CD4-positive, alpha-beta memory T cell (primary cell): ENCODE measurements at regions of chr19 and their contacts with region 1.

Region 1: DNA sequence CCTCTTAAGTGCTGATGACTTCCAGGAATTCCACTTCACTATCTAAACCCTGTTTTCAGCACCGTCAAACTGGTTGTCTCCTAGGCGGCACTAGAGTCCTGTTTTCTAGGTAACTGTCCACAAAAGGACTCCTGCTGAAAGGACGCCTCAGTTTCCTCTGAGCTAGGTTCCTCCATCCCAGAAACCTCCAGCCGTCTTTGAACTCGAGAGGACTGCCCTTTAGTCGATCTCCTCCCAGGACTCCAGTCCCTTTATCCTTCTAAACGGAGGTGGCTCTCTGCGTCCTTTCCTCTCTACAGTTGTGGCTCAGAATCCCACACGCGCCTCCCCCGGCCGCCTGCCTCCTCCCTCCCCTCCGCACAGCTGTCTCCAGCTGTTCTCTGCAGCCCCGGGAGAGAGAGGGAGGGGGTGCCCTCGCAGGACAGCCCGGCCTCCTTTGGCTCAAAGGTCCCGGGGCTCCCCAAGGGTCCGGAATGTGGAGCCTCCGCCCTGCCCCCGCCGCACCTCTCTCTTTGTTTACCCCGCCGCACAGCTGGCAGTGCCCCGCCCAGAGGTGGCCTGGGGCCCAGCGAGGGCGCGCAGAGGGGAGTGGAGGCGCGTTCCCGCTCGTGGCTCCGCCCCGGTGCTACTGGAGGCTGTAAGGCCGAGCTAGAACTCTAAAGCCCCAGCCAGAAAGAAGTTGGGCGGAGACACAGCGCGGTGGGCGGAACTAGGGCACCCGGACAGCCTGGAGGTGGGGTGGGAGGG is 2.4 kb downstream of the LTBP4 start:
- DNase-seq: peak; percentile 94 to 99 (median 98)
- H3K4me3 ChIP-seq: peak overlapping the region in 1 of 2 donors; percentile 59
- H3K4me3 Mint-ChIP-seq: peak overlapping the region; percentile 80 to 97 (median 90)
- H3K27ac ChIP-seq: peak overlapping the region; percentile 61
- H3K27ac Mint-ChIP-seq: peak overlapping the region; percentile 96 to 99 (median 97)
- H3K4me1 ChIP-seq: peaks cover 84% of the 10 kb centered on the region
- H3K4me1 Mint-ChIP-seq: peaks cover 39 to 91% (median 64%) of the 10 kb centered on the region in 4 donors
- H3K27me3 ChIP-seq: peaks cover 14% of the 10 kb centered on the region
- H3K27me3 Mint-ChIP-seq: peaks cover 9 to 20% of the 10 kb centered on the region in 2 donors

Region 2: DNA sequence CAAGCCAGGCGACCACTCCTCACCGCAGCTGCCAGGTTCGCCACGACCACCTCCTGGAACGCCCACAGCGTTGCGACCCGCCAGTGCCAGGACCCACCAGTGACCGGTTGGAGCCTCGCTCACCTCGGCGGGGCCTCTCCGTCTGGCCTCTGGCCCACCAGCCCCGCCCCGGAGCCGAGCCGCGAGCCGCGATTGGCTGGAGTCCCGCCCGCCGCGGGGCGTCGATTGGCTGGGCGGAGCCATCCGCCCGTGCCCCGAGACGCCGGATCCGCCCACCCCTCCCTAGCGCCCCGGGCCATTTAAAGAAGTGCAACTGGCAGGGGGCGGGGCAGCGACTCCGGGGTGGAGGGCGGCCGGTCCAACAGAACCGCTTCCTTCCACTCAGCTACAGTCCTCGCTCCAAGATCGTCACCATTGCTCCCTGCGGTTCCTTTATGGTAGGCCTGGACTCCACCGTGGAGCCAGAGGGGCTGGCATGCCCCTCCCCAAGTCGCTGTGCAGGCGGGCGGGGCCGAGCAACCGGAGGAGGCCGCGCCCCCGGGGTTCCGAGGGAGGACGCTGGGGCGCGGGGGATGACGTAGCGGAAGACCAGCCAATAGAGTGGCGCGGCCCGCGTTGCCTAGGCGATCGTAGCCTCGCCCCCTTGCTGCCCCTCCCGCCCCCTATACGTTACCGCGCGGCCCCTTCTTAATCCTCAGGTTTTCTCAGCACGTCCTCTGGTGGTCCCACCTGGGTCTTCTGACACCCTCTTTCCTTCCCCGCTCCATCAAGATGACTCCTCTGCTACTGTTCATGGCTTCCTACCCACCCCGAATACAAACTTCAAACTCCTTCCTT is 159.2 kb before region 1 on chr19 and contains the start of gene SERTAD3:
- CTCF ChIA-PET with region 1: no interaction called
- POLR2A ChIA-PET with region 1: interaction called, 16 read pairs
- intact Hi-C with region 1: loop called (anchors 2 kb)
- DNase-seq: peak; percentile 96 to 99 (median 97)
- H3K4me3 ChIP-seq: peak within 1 kb of the TSS; percentile 96 to 100
- H3K4me3 Mint-ChIP-seq: peak within 1 kb of the TSS; percentile 96 to 100 (median 100)
- H3K27ac ChIP-seq: peak within 1 kb of the TSS; percentile 75
- H3K27ac Mint-ChIP-seq: peak within 1 kb of the TSS; percentile 85 to 100 (median 99)
- H3K4me1 ChIP-seq: peaks cover 11% of the 10 kb centered on the region
- H3K4me1 Mint-ChIP-seq: peaks cover 11 to 22% (median 18%) of the 10 kb centered on the region in 4 donors
- H3K27me3 ChIP-seq: no peaks in the 10 kb centered on the region
- H3K27me3 Mint-ChIP-seq: no peaks in the 10 kb centered on the region
- total RNA-seq, gene SERTAD3: 17.8 to 19.4 TPM

Region 3: GRCh38 chr19:40519352-40520322 is 83.9 kb before region 1 on chr19:
- CTCF ChIA-PET with region 1: no interaction called
- POLR2A ChIA-PET with region 1: no interaction called
- intact Hi-C with region 1: no loop called
- DNase-seq: no peak
- H3K4me3 ChIP-seq: no peak overlapping the region
- H3K4me3 Mint-ChIP-seq: no peak overlapping the region
- H3K27ac ChIP-seq: no peak overlapping the region
- H3K27ac Mint-ChIP-seq: no peak overlapping the region
- H3K4me1 ChIP-seq: no peaks in the 10 kb centered on the region
- H3K4me1 Mint-ChIP-seq: peaks cover under 1 to 6% (median 4%) of the 10 kb centered on the region in 4 donors
- H3K27me3 ChIP-seq: no peaks in the 10 kb centered on the region
- H3K27me3 Mint-ChIP-seq: peaks cover 14 to 30% of the 10 kb centered on the region in 2 donors

Region 4: DNA sequence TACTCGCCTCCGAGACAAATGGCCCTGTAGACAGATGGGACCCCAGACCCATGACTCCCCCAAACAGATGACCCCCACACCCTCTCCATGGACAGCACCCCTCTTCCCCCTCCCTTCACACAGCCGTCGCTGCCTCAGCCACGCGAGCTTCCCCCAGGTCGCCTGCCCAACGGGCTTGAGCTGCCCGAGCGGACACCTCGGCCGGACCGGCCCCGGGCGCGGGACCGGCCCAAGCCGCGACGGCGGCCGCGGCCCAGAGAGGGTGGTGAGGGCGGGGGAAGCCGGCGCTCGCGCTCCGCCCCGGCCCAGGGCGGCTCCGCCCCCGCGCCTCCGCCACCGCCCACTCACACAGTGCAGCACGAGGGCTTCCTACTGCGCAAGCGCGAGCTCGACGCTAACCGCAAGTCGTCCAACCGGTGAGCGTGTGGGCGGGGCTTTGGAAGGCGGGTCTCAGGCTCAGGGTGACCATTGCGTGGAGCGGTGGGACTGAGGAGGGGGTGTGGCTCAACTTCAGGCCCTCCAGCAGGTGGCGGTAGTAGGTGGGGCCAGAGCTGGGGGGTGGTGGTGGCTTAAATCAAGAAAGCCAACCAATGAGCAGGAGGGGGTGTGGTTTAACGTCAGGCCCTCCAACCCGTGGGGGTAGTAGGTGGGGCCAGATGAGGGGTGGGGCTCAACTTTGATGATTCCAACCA is 33.1 kb before region 1 on chr19:
- CTCF ChIA-PET with region 1: interaction called, 17 read pairs
- POLR2A ChIA-PET with region 1: interaction called, 71 read pairs
- intact Hi-C with region 1: no loop called
- DNase-seq: peak; percentile 95 to 98 (median 98)
- H3K4me3 ChIP-seq: peak overlapping the region; percentile 17 to 61
- H3K4me3 Mint-ChIP-seq: peak overlapping the region; percentile 65 to 88 (median 82)
- H3K27ac ChIP-seq: no peak overlapping the region
- H3K27ac Mint-ChIP-seq: peak overlapping the region; percentile 30 to 94 (median 91)
- H3K4me1 ChIP-seq: peaks cover 14% of the 10 kb centered on the region
- H3K4me1 Mint-ChIP-seq: peaks cover 8 to 26% (median 16%) of the 10 kb centered on the region in 4 donors
- H3K27me3 ChIP-seq: no peaks in the 10 kb centered on the region
- H3K27me3 Mint-ChIP-seq: peaks cover 5 to 7% of the 10 kb centered on the region in 2 donors

Region 5: GRCh38 chr19:40633207-40633606 is 29.6 kb after region 1 on chr19:
- CTCF ChIA-PET with region 1: interaction called, 106 read pairs
- POLR2A ChIA-PET with region 1: interaction called, 13 read pairs
- intact Hi-C with region 1: loop called (anchors 1 kb)
- DNase-seq: no peak
- H3K4me3 ChIP-seq: no peak overlapping the region
- H3K4me3 Mint-ChIP-seq: no peak overlapping the region
- H3K27ac ChIP-seq: no peak overlapping the region
- H3K27ac Mint-ChIP-seq: no peak overlapping the region
- H3K4me1 ChIP-seq: peaks cover 6% of the 10 kb centered on the region
- H3K4me1 Mint-ChIP-seq: peaks cover 4 to 14% (median 7%) of the 10 kb centered on the region in 4 donors
- H3K27me3 ChIP-seq: no peaks in the 10 kb centered on the region
- H3K27me3 Mint-ChIP-seq: peaks cover 0 to 2% of the 10 kb centered on the region in 2 donors

Region 6: DNA sequence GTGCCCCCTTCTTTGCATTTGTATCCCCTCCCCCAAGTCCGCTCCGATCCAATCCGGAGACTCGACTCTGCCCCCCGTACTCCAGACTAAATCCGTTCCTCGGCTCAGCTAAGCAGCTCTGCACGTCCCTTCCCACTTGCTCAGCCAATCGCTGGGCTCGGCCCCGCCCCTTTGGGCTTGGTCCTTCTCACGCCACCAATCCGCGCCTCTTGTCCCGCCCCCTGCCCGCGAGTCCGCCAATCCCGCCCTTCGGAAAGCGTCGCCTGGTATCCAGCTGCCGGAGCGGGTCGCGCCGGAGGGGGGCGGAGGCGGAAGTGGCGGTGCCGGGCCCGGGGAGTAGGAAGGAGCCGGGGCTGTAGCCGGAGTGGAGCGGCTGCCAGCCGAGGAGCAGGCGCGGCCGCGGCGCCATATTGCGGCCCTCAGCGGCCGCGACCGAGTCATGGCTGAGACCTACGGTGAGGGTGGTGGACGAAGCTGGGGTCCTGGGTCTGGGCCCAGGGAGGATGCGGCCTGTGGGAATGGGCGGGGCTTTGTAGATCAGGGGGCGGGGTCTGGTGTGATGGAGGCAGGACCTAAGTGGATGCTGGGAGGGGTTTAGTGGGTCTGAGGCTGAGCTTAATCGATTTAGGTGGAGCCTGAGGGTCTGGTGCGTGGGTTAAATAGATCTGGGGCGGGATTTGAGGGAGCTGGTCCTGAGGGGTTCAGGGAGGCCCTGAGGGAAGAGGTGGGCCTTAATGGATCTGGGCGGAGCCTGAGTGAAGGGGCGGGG is 174.6 kb after region 1 on chr19 and contains the start of gene RAB4B:
- CTCF ChIA-PET with region 1: no interaction called
- POLR2A ChIA-PET with region 1: interaction called, 11 read pairs
- intact Hi-C with region 1: no loop called
- DNase-seq: peak; percentile 100
- H3K4me3 ChIP-seq: peak within 1 kb of the TSS; percentile 67 to 98
- H3K4me3 Mint-ChIP-seq: peak within 1 kb of the TSS; percentile 92 to 98 (median 95)
- H3K27ac ChIP-seq: peak within 1 kb of the TSS; percentile 89
- H3K27ac Mint-ChIP-seq: peak within 1 kb of the TSS; percentile 95 to 99 (median 99)
- H3K4me1 ChIP-seq: peaks cover 29% of the 10 kb centered on the region
- H3K4me1 Mint-ChIP-seq: peaks cover 24 to 45% (median 31%) of the 10 kb centered on the region in 4 donors
- H3K27me3 ChIP-seq: no peaks in the 10 kb centered on the region
- H3K27me3 Mint-ChIP-seq: no peaks in the 10 kb centered on the region
- total RNA-seq, gene RAB4B: 53.5 to 55.0 TPM